Common myeloid progenitor, CD34-positive (primary cell): ENCODE measurements at regions of chr2 and their contacts with region 1.

Region 1: GRCh38 chr2:71798266-71799012 is 345.1 kb downstream of the DYSF start:
- DNase-seq: peak; percentile 20 to 52 (median 41)
- H3K4me3 ChIP-seq: no peak overlapping the region
- H3K27ac ChIP-seq: no peak overlapping the region
- H3K4me1 ChIP-seq: no peaks in the 10 kb centered on the region
- H3K27me3 ChIP-seq: peaks cover 0 to 3% (median 0%) of the 10 kb centered on the region in 5 experiments

Region 2: GRCh38 chr2:71530641-71531332 is 267.7 kb before region 1 on chr2:
- CTCF ChIA-PET with region 1: interaction called, 15 read pairs
- POLR2A ChIA-PET with region 1: no interaction called
- DNase-seq: peak; percentile 40 to 67 (median 63)
- H3K4me3 ChIP-seq: no peak overlapping the region
- H3K27ac ChIP-seq: no peak overlapping the region
- H3K4me1 ChIP-seq: peaks cover 0 to 4% (median 0%) of the 10 kb centered on the region in 4 experiments
- H3K27me3 ChIP-seq: peaks cover 0 to 8% (median 2%) of the 10 kb centered on the region in 5 experiments

Region 3: GRCh38 chr2:71545572-71546274 is 252.7 kb before region 1 on chr2:
- CTCF ChIA-PET with region 1: interaction called, 52 read pairs
- POLR2A ChIA-PET with region 1: no interaction called
- DNase-seq: peak; percentile 74 to 85 (median 79)
- H3K4me3 ChIP-seq: peak overlapping the region in 4 of 7 experiments; percentile 4 to 71 (median 53)
- H3K27ac ChIP-seq: no peak overlapping the region
- H3K4me1 ChIP-seq: peaks cover 0 to 5% (median 4%) of the 10 kb centered on the region in 4 experiments
- H3K27me3 ChIP-seq: peaks cover 0 to 9% (median 0%) of the 10 kb centered on the region in 5 experiments

Region 4: DNA sequence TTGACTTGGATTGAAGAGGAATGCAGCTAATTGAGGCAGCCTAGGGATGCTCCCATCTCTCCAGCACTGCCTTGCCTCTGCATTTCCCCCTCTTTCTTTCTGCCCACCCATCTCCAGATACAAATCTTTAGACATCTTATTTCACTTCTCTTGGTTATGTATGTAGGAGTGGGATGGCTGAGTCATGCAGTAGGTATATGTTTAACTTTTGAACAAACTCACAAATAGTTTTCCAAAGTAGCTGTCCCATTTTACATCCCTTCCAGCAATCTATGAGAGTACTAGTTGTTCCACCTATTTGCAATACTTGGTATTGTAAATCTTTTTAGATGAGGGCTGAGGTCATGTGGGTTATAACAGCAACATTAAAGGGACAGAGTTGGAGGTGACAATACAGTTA is 15.2 kb before region 1 on chr2:
- CTCF ChIA-PET with region 1: interaction called, 10 read pairs
- POLR2A ChIA-PET with region 1: no interaction called
- DNase-seq: no peak
- H3K4me3 ChIP-seq: no peak overlapping the region
- H3K27ac ChIP-seq: no peak overlapping the region
- H3K4me1 ChIP-seq: no peaks in the 10 kb centered on the region
- H3K27me3 ChIP-seq: peaks cover 0 to 28% (median 3%) of the 10 kb centered on the region in 5 experiments

Region 5: GRCh38 chr2:72316774-72317173 is 518.3 kb after region 1 on chr2:
- CTCF ChIA-PET with region 1: no interaction called
- POLR2A ChIA-PET with region 1: no interaction called
- DNase-seq: no peak
- H3K4me3 ChIP-seq: no peak overlapping the region
- H3K27ac ChIP-seq: no peak overlapping the region
- H3K4me1 ChIP-seq: no peaks in the 10 kb centered on the region
- H3K27me3 ChIP-seq: no peaks in the 10 kb centered on the region

Region 6: DNA sequence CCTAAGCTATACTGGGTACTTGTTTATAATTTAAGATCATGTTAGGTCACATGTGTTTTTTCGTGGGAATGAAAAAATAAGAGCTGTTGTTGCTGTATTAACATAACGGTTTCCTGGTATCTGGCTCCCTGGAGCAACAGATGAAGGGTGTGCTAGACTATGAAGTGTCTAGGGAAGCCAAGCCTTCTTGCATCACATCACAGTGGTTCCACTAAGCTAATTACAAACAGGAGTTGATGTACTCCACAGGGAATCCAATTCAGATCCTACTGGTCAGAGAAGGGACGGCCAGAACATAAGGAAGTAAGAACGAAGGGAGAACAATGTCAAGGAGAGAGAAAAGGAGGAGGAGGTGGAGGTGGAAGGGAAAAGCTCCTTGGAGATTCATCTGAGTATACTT is 542.2 kb after region 1 on chr2:
- CTCF ChIA-PET with region 1: no interaction called
- POLR2A ChIA-PET with region 1: no interaction called
- DNase-seq: no peak
- H3K4me3 ChIP-seq: no peak overlapping the region
- H3K27ac ChIP-seq: no peak overlapping the region
- H3K4me1 ChIP-seq: no peaks in the 10 kb centered on the region
- H3K27me3 ChIP-seq: no peaks in the 10 kb centered on the region